Mammary epithelial cell (primary cell): ENCODE measurements at regions of chr3 and their contacts with region 1.

Region 1: GRCh38 chr3:88003115-88003755 is 55.6 kb downstream of the CGGBP1 start:
- DNase-seq: peak; percentile 29
- H3K4me3 ChIP-seq: no peak overlapping the region
- H3K27ac ChIP-seq: no peak overlapping the region
- H3K4me1 ChIP-seq: peaks cover 3% of the 10 kb centered on the region
- H3K27me3 ChIP-seq: no peaks in the 10 kb centered on the region
- CTCF ChIP-seq: peak; percentile 69 to 75

Region 2: DNA sequence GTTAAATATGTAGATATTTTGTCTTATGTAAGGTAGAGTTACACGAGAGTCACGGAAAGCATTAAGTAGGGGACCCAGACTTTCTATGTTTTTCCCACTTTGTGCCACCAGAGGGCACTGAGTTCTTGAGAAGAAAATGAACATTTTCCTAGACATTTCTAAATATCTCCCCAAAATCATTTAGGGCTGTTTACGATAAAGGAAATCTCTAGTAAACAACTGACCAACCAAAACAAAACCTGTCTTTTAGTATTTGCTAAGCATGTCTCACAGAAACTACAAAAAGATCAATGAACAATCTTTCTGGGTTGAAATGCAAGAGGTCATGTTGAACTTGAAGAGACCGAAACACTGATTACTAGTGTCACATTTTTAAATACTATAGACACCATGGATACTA is 743.0 kb before region 1 on chr3:
- CTCF ChIA-PET with region 1: no interaction called
- dilution Hi-C with region 1: no loop called
- in situ Hi-C with region 1: no loop called
- intact Hi-C with region 1: loop called (anchors 10 kb)
- DNase-seq: peak; percentile 24
- H3K4me3 ChIP-seq: no peak overlapping the region
- H3K27ac ChIP-seq: no peak overlapping the region
- H3K4me1 ChIP-seq: no peaks in the 10 kb centered on the region
- H3K27me3 ChIP-seq: no peaks in the 10 kb centered on the region
- CTCF ChIP-seq: peak; percentile 64 to 76

Region 3: GRCh38 chr3:87298111-87298718 is 705.0 kb before region 1 on chr3:
- CTCF ChIA-PET with region 1: no interaction called
- dilution Hi-C with region 1: no loop called
- in situ Hi-C with region 1: no loop called
- intact Hi-C with region 1: loop called (anchors 1 kb)
- DNase-seq: peak; percentile 22
- H3K4me3 ChIP-seq: no peak overlapping the region
- H3K27ac ChIP-seq: no peak overlapping the region
- H3K4me1 ChIP-seq: no peaks in the 10 kb centered on the region
- H3K27me3 ChIP-seq: peaks cover 4% of the 10 kb centered on the region
- CTCF ChIP-seq: peak; percentile 62 to 66

Region 4: GRCh38 chr3:87350364-87351199 is 652.7 kb before region 1 on chr3:
- CTCF ChIA-PET with region 1: no interaction called
- dilution Hi-C with region 1: no loop called
- in situ Hi-C with region 1: no loop called
- intact Hi-C with region 1: loop called (anchors 2 kb)
- DNase-seq: peak; percentile 38
- H3K4me3 ChIP-seq: no peak overlapping the region
- H3K27ac ChIP-seq: no peak overlapping the region
- H3K4me1 ChIP-seq: no peaks in the 10 kb centered on the region
- H3K27me3 ChIP-seq: no peaks in the 10 kb centered on the region
- CTCF ChIP-seq: peak; percentile 83 to 91

Region 5: GRCh38 chr3:87771341-87772192 is 231.7 kb before region 1 on chr3:
- CTCF ChIA-PET with region 1: interaction called, 3 read pairs
- dilution Hi-C with region 1: no loop called
- in situ Hi-C with region 1: no loop called
- intact Hi-C with region 1: loop called (anchors 1 kb)
- DNase-seq: peak; percentile 25
- H3K4me3 ChIP-seq: no peak overlapping the region
- H3K27ac ChIP-seq: no peak overlapping the region
- H3K4me1 ChIP-seq: no peaks in the 10 kb centered on the region
- H3K27me3 ChIP-seq: no peaks in the 10 kb centered on the region
- CTCF ChIP-seq: peak; percentile 78 to 93

Region 6: DNA sequence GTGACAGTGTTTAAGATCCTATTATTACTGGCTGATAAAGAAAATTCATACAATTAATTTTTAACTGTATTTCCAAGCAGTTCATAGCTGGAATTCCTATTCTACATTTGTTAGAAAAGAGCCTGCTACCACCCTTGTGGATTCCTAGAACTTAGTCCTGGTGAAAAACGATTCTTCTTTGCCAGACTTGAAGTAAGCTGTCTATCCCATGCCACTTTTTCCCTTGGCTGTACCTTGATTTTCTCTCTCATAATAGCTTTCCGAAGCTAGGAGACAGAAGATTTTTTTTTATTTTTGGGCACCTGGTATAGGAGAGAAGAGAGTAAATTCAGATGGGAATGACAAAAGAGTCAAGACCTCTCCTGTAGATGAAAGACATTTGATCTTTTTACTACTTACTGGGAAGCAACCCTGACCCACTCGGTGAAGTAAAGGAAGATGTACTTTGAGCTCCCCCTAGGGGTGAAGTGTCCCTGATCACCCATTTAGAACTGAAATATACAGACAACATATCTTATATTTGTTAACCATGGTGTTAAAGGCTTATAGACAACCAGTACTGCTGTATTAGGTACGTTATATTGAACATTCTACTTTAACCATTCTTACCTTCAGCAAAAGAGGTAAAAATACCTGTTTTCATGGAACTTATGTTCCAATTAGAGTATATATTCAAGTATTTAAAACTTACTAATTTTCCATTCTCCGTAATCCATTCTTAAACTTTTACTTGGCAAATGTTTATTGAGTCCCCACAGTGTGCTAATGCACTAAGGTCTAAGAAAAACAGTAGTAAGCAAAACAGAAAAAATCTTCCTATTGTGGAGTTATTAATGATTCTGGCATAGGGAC is 110.3 kb after region 1 on chr3:
- CTCF ChIA-PET with region 1: interaction called, 8 read pairs
- dilution Hi-C with region 1: no loop called
- in situ Hi-C with region 1: no loop called
- intact Hi-C with region 1: loop called (anchors 1 kb)
- DNase-seq: peak; percentile 58
- H3K4me3 ChIP-seq: no peak overlapping the region
- H3K27ac ChIP-seq: no peak overlapping the region
- H3K4me1 ChIP-seq: no peaks in the 10 kb centered on the region
- H3K27me3 ChIP-seq: no peaks in the 10 kb centered on the region
- CTCF ChIP-seq: peak; percentile 69 to 71

Region 7: GRCh38 chr3:88180398-88180999 is 177.3 kb after region 1 on chr3:
- CTCF ChIA-PET with region 1: no interaction called
- dilution Hi-C with region 1: no loop called
- in situ Hi-C with region 1: no loop called
- intact Hi-C with region 1: loop called (anchors 5 kb)
- DNase-seq: peak; percentile 37
- H3K4me3 ChIP-seq: no peak overlapping the region
- H3K27ac ChIP-seq: no peak overlapping the region
- H3K4me1 ChIP-seq: no peaks in the 10 kb centered on the region
- H3K27me3 ChIP-seq: no peaks in the 10 kb centered on the region
- CTCF ChIP-seq: peak; percentile 20 to 52